Gastrocnemius medialis (tissue), 4 donors: ENCODE measurements at regions of chr2 and their contacts with region 1.

Region 1: GRCh38 chr2:74002487-74003391 is 18.0 kb downstream of the TET3 start:
- DNase-seq: peak; percentile 52 to 64
- ATAC-seq: peak; percentile 82 to 90
- H3K4me3 ChIP-seq: peak overlapping the region; percentile 57 to 87 (median 63)
- H3K27ac ChIP-seq: peak overlapping the region in 3 of 4 donors; percentile 61 to 68 (median 66)
- H3K4me1 ChIP-seq: peaks cover 26 to 27% of the 10 kb centered on the region in 2 donors
- H3K27me3 ChIP-seq: no peaks in the 10 kb centered on the region
- CTCF ChIP-seq: peak in 1 of 5 experiments; percentile 17
- POLR2A ChIP-seq: peak; percentile 71 to 72

Region 2: DNA sequence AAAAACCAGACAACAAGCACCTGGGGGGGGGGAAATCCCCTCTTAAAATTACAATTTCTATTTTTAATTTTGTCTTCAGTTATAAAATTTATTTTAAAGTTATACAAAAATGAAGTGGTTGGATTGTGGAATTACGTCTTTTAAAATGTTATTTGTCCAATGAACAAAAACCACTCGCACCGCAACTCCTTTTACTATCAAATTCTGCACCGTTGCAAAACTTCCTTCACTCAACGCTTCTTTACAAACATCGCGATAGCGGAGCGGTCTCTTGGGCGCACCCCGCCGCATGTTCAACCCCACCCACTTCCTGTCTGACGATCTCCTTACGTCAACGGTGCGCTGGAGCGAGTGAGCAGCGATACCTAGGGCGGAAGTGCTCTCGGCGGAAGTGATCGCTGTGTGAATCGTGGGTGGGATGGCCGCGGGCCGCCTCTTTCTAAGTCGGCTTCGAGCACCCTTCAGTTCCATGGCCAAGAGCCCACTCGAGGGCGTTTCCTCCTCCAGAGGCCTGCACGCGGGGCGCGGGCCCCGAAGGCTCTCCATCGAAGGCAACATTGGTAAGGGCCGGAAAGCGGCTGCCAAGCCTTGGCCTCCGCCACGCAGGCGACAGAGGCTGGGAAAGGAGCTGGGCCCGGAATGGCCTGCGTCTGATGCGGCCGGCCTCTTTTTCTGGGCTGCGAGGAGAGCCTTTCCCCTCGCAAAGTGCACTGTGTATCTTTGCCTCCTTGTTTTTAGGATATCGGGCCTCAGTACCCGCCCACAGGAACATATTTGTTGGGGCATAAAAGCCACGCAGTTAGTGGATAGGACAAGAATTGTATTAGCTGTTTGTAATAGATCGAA is 76.0 kb before region 1 on chr2 and contains the start of gene DGUOK:
- in situ Hi-C with region 1: no loop called
- intact Hi-C with region 1: loop called (anchors 2 kb)
- DNase-seq: peak; percentile 96 to 97
- ATAC-seq: peak; percentile 100
- H3K4me3 ChIP-seq: peak within 1 kb of the TSS; percentile 69 to 91 (median 82)
- H3K27ac ChIP-seq: peak within 1 kb of the TSS; percentile 82 to 93 (median 91)
- H3K4me1 ChIP-seq: peaks cover 15 to 17% of the 10 kb centered on the region in 2 donors
- H3K27me3 ChIP-seq: peaks cover 0 to under 1% (median 0%) of the 10 kb centered on the region in 3 donors
- CTCF ChIP-seq: no peak
- POLR2A ChIP-seq: peak; percentile 82 to 90
- total RNA-seq, gene DGUOK: 10.2 to 25.2 (median 20.3) TPM

Region 3: DNA sequence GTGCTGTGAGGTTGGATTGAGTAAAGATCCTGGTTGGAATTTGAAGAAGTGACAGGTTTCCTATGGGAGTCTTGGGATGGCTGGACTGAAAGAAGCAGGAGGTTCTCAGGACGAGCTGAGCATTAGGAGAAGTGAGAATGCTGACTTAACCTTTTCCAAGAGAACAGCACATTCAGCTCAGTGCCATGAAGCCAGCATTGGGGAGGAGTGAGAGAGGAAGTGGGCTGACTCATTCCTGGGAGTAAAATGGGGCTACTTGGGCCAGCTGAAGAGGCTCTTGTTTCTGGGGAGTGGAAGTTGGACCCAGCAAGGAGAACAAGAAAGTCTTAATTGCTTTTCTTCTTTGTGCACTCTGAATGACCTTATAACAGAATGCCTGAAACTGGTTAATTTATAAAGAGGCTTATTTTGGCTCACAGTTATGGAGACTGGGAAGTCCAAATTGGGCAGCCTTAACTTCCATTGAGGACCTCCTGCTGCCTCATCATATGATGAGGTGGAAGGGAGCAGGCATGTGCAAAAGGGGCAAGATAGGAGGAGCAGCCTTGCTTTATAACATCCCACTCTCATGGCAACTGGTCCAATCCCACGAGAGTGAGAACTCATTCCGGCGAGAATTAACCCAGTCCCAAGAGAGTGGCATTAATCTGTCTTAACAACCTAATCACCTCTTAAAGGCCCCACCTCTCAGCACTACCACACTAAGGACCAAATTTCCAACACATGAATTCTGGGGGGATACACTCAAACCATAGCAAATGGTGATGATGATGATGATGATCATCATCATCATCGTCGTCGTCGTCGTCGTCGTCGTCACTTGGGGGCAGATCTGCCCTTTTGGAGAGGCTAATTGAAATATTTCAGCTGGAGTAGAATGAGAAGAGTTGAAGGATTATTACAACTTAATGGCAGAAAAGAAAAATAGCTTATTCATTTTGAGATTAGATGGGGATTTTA is 50.0 kb before region 1 on chr2:
- in situ Hi-C with region 1: no loop called
- intact Hi-C with region 1: no loop called
- DNase-seq: peak in 1 of 2 donors; percentile 29
- ATAC-seq: no peak
- H3K4me3 ChIP-seq: no peak overlapping the region
- H3K27ac ChIP-seq: no peak overlapping the region
- H3K4me1 ChIP-seq: no peaks in the 10 kb centered on the region
- H3K27me3 ChIP-seq: no peaks in the 10 kb centered on the region
- CTCF ChIP-seq: no peak
- POLR2A ChIP-seq: no peak

Region 4: GRCh38 chr2:73985308-73986084 is 17.2 kb before region 1 on chr2:
- in situ Hi-C with region 1: no loop called
- intact Hi-C with region 1: loop called (anchors 1 kb)
- DNase-seq: no peak
- ATAC-seq: peak; percentile 7 to 12
- H3K4me3 ChIP-seq: peak overlapping the region; percentile 58 to 71 (median 62)
- H3K27ac ChIP-seq: peak overlapping the region in 3 of 4 donors; percentile 25 to 62 (median 53)
- H3K4me1 ChIP-seq: peaks cover 41 to 51% of the 10 kb centered on the region in 2 donors
- H3K27me3 ChIP-seq: no peaks in the 10 kb centered on the region
- CTCF ChIP-seq: no peak
- POLR2A ChIP-seq: peak in 1 of 2 donors; percentile 23

Region 5: DNA sequence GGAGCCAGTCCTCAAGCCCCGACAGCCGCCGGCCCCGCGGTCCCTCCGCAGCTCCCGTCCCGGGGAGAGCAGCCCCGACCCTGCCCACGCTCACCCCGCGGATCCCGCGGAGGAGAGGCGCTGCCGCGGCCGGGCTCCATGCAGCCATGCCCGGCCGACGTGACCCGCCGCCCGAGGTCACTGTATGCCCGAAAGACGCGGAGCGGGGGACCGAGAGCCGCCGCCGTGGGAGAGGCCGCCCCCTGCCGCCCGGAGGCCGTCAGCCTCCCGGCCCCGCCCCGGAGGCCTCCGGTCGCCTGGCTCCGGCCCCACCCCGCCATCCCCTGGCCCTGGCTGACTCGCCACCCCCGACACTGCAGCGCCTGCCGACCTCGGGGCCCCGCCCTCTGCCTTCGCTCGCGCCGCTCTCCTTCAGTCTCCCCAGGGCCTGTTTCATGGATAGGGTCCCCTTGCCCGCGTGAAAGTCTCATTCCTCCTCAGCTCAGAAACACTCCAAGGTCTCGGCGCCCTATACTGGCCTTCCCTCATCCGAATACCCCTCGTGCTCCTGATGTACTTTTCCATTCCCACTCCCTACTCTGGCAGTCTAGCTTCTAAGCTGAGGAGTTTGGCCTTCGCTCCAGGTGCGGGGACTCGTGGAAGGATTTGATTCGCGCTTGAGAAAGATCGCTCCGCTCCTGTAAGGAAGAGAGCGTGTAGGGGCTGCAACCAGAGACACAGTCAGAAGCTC is 145.2 kb after region 1 on chr2 and contains the start of gene BOLA3:
- in situ Hi-C with region 1: no loop called
- intact Hi-C with region 1: loop called (anchors 10 kb)
- DNase-seq: peak; percentile 68 to 74
- ATAC-seq: peak; percentile 86 to 92
- H3K4me3 ChIP-seq: peak within 1 kb of the TSS; percentile 68 to 84 (median 78)
- H3K27ac ChIP-seq: peak within 1 kb of the TSS; percentile 51 to 78 (median 62)
- H3K4me1 ChIP-seq: peaks cover 7 to 9% of the 10 kb centered on the region in 2 donors
- H3K27me3 ChIP-seq: no peaks in the 10 kb centered on the region
- CTCF ChIP-seq: peak in 4 of 5 experiments; percentile 47 to 80 (median 64)
- POLR2A ChIP-seq: no peak
- total RNA-seq, gene BOLA3: 32.2 to 114 (median 69.5) TPM